PC-3 (cell line): ENCODE measurements at regions of chr7 and their contacts with region 1.

Region 1: DNA sequence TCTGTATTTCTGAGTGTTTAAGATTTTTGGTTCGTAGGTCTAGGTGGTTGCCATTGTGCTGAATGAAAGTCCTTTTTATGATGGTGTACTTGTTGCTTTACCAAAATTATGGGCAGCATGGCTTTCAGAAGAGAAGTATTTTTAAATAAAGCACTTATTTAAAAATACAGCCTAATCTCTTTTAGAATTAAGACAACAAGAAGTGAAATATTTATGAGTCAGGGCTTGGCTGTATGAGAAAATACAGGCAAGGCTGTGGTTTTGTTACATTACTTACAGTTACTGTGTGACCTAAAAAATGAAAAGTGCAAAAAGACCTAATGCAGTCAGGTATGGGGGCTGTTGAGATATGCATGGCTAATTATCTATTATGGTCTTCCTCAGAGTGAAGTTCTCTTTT is 185.2 kb upstream of the PPP1R3A start:
- DNase-seq: no peak
- ATAC-seq: no peak
- H3K4me3 ChIP-seq: no peak overlapping the region
- H3K27ac ChIP-seq: no peak overlapping the region
- H3K4me1 ChIP-seq: no peaks in the 10 kb centered on the region
- H3K27me3 ChIP-seq: peaks cover 3% of the 10 kb centered on the region; the same call in 1 of the 2 replicates
- CTCF ChIP-seq: no peak

Region 2: GRCh38 chr7:113550991-113551390 is 553.0 kb before region 1 on chr7:
- CTCF ChIA-PET with region 1: no interaction called
- POLR2A ChIA-PET with region 1: no interaction called
- intact Hi-C with region 1: loop called (anchors 5 kb)
- DNase-seq: no peak
- ATAC-seq: no peak
- H3K4me3 ChIP-seq: no peak overlapping the region
- H3K27ac ChIP-seq: no peak overlapping the region
- H3K4me1 ChIP-seq: no peaks in the 10 kb centered on the region
- H3K27me3 ChIP-seq: no peaks in the 10 kb centered on the region
- CTCF ChIP-seq: no peak

Region 3: DNA sequence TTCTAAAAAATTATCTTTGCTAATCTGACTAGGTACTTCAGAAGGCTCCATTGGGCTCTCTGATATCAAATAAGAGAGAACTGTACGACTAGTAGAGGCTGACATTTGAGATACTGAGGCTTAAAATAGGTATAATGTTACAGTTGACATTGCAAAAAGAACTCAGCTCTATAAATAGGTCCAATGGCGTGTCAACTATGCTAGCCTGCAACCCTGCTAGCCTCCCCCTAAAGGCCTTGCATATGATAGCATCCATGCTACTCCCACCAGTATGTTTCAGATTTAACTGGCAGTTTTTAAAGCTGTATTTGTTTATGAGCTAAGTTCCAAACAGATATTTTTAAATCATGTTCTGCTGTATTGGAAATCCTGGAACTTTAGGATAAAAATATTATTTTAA is 185.1 kb before region 1 on chr7 and contains the start of gene PPP1R3A:
- CTCF ChIA-PET with region 1: no interaction called
- POLR2A ChIA-PET with region 1: no interaction called
- intact Hi-C with region 1: no loop called
- DNase-seq: no peak
- ATAC-seq: no peak
- H3K4me3 ChIP-seq: no peak within 1 kb of the TSS
- H3K27ac ChIP-seq: no peak within 1 kb of the TSS
- H3K4me1 ChIP-seq: no peaks in the 10 kb centered on the region
- H3K27me3 ChIP-seq: no peaks in the 10 kb centered on the region
- CTCF ChIP-seq: no peak
- total RNA-seq, gene PPP1R3A: not detected in 2 replicates

Region 4: GRCh38 chr7:114048386-114049240 is 55.4 kb before region 1 on chr7:
- CTCF ChIA-PET with region 1: no interaction called
- POLR2A ChIA-PET with region 1: no interaction called
- intact Hi-C with region 1: no loop called
- DNase-seq: peak; percentile 6
- ATAC-seq: no peak
- H3K4me3 ChIP-seq: peak overlapping the region; percentile 52; the same call in 1 of the 2 replicates
- H3K27ac ChIP-seq: no peak overlapping the region
- H3K4me1 ChIP-seq: no peaks in the 10 kb centered on the region
- H3K27me3 ChIP-seq: no peaks in the 10 kb centered on the region
- CTCF ChIP-seq: no peak